CD4-positive, alpha-beta T cell (primary cell): ENCODE measurements at regions of chr16 and their contacts with region 1.

Region 1: DNA sequence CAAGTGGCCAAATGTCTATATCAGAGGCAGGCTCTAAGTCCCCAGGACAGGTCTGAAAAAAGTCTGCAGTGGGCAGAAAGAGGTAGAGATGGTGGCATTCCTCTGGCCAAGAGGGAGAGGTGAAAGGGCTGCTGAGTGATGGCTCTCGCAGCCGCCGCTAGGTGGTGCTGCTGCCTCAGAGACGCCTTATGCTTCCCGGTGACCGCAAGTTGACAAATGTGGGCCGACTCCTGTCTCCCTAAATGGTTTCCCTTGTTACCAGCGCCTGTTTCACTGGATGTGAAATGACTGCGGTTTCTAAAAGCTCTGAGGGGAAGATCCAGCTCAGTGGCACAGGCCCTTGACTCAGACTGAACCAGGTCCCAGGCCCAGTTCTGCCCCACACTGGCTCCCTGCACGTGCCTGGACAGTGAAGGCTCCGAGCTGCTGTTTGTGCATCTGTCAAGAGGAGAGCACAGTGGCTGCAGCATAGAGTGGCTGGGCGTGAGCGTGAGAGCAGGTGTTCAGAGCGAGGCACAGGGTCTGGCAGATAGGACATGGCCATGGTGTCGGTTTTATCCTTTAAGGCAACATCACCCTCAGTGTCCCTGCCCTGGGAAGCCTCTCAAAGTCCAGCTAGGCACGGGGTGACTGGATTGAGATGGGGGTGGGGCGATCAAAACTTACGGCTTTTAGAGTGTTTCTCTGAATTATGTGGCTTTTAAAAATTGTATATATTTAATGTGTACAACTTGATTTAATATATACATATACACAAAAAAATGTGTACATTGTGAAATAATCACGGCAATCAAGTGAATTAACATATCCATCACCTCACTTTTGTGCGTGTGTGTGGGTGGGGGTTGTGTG is 19.9 kb downstream of the CLEC16A start:
- DNase-seq: peak; percentile 65 to 91 (median 78)
- ATAC-seq: peak; percentile 49
- H3K4me3 ChIP-seq: peak overlapping the region; percentile 9
- H3K4me3 Mint-ChIP-seq: peak overlapping the region; percentile 38
- H3K27ac ChIP-seq: no peak overlapping the region
- H3K27ac Mint-ChIP-seq: peak overlapping the region; percentile 76
- H3K4me1 ChIP-seq: peaks cover 28% of the 10 kb centered on the region
- H3K4me1 Mint-ChIP-seq: peaks cover 30% of the 10 kb centered on the region
- H3K27me3 ChIP-seq: no peaks in the 10 kb centered on the region
- H3K27me3 Mint-ChIP-seq: no peaks in the 10 kb centered on the region
- CTCF ChIP-seq: peak; percentile 99

Region 2: GRCh38 chr16:10944249-10945064 is 19.8 kb before region 1 on chr16 and contains the start of gene CLEC16A:
- CTCF ChIA-PET with region 1: interaction called, 4 read pairs
- POLR2A ChIA-PET with region 1: interaction called, 10 read pairs
- intact Hi-C with region 1: no loop called
- DNase-seq: peak; percentile 89 to 98 (median 95)
- ATAC-seq: peak; percentile 76
- H3K4me3 ChIP-seq: peak within 1 kb of the TSS; percentile 85
- H3K4me3 Mint-ChIP-seq: peak within 1 kb of the TSS; percentile 96
- H3K27ac ChIP-seq: peak within 1 kb of the TSS in 1 of 2 donors; percentile 55
- H3K27ac Mint-ChIP-seq: peak within 1 kb of the TSS; percentile 76
- H3K4me1 ChIP-seq: peaks cover 73% of the 10 kb centered on the region
- H3K4me1 Mint-ChIP-seq: peaks cover 73% of the 10 kb centered on the region
- H3K27me3 ChIP-seq: no peaks in the 10 kb centered on the region
- H3K27me3 Mint-ChIP-seq: no peaks in the 10 kb centered on the region
- CTCF ChIP-seq: no peak
- total RNA-seq, gene CLEC16A: 21.7 to 22.7 TPM

Region 3: DNA sequence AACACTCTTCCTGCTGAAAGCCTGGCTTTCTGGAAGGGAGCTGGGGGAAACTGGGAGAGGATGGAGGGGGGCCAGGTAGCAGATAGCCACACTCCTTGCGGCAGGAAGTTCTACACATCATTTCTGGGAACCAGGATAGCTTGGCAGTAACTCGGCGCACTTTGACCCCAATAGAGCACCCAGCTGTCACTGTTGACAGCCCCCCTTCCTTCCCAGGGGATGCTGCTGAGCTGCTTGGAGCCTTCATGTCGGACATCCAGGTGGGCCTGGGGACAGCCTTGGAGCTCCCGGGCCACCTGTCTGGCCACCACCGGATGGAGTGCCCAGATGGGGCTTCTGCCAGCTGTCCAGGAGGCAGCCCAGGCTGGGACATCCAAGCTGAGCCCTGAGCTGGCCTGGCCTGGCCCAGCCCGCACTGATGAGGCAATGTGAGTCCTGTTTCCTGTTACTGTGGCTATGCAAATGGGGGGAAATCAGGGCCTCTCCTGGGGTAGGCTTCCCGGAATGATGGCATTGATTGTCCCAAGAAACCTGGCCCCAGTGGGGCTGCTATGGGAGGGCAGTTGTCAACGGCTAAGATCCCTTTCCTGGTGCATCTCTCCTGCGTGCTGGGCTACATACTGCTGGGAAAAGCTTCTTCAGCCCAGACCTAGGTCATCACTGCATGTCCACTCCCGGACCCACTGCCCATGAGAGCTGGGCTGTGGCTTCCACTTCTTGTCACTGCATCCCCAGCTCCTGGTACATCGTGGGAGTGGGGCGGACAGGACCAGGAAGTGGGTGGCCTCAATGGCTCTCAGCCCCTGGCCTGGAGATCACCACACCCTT is 241.7 kb after region 1 on chr16:
- CTCF ChIA-PET with region 1: no interaction called
- POLR2A ChIA-PET with region 1: no interaction called
- intact Hi-C with region 1: no loop called
- DNase-seq: peak in 2 of 14 experiments; percentile 46 to 49
- ATAC-seq: no peak
- H3K4me3 ChIP-seq: no peak overlapping the region
- H3K4me3 Mint-ChIP-seq: no peak overlapping the region
- H3K27ac ChIP-seq: no peak overlapping the region
- H3K27ac Mint-ChIP-seq: no peak overlapping the region
- H3K4me1 ChIP-seq: peaks cover 21% of the 10 kb centered on the region
- H3K4me1 Mint-ChIP-seq: peaks cover 10% of the 10 kb centered on the region
- H3K27me3 ChIP-seq: peaks cover 0 to 2% of the 10 kb centered on the region in 2 experiments
- H3K27me3 Mint-ChIP-seq: no peaks in the 10 kb centered on the region
- CTCF ChIP-seq: no peak

Region 4: DNA sequence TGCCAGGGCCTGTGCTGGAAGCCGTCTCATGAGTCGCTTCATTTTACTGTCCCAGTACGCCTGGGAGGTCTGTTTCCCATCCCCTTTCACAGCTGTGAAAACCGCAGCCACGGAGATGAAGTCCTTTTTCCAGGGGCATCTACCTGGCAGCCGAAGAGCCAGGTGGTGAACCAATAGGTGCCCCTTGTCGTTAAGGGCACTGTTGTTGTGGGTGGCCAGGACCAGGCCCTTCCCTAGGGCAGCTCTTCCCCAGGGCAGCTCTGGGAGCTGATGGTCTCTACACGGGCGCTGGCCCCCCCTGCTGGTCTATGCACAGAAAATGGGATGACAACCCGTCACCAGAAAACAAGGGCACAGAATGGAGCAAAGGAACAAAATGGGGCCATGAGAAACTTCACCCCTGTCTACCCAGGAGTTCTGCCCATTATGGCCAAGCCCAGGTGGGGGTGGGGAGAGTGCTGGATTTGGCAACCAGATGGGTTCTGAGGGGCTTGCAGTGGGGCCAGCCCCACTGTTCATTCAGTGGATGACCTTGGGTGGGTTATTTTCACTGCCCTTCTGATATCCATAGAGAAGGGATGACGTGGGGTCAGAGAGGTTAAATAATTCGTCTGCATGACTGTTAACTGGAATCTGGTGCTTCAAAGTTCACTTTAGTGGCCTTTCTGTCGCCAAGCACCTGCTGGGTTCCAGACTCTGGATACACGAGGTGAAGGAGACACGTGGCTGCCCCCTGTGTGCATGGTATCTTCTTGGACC is 392.5 kb after region 1 on chr16:
- CTCF ChIA-PET with region 1: interaction called, 7 read pairs
- POLR2A ChIA-PET with region 1: no interaction called
- intact Hi-C with region 1: loop called in 1 of 2 experiments (anchors 2 kb)
- DNase-seq: peak in 13 of 14 experiments; percentile 33 to 76 (median 48)
- ATAC-seq: no peak
- H3K4me3 ChIP-seq: no peak overlapping the region
- H3K4me3 Mint-ChIP-seq: peak overlapping the region; percentile 42
- H3K27ac ChIP-seq: no peak overlapping the region
- H3K27ac Mint-ChIP-seq: peak overlapping the region; percentile 93
- H3K4me1 ChIP-seq: peaks cover 53% of the 10 kb centered on the region
- H3K4me1 Mint-ChIP-seq: peaks cover 76% of the 10 kb centered on the region
- H3K27me3 ChIP-seq: peaks cover 0 to 4% of the 10 kb centered on the region in 2 experiments
- H3K27me3 Mint-ChIP-seq: no peaks in the 10 kb centered on the region
- CTCF ChIP-seq: peak; percentile 61

Region 5: GRCh38 chr16:11407047-11407982 is 443.1 kb after region 1 on chr16:
- CTCF ChIA-PET with region 1: no interaction called
- POLR2A ChIA-PET with region 1: no interaction called
- intact Hi-C with region 1: loop called (anchors 5 kb)
- DNase-seq: peak; percentile 40 to 81 (median 54)
- ATAC-seq: peak; percentile 78
- H3K4me3 ChIP-seq: no peak overlapping the region
- H3K4me3 Mint-ChIP-seq: no peak overlapping the region
- H3K27ac ChIP-seq: no peak overlapping the region
- H3K27ac Mint-ChIP-seq: no peak overlapping the region
- H3K4me1 ChIP-seq: no peaks in the 10 kb centered on the region
- H3K4me1 Mint-ChIP-seq: no peaks in the 10 kb centered on the region
- H3K27me3 ChIP-seq: no peaks in the 10 kb centered on the region
- H3K27me3 Mint-ChIP-seq: no peaks in the 10 kb centered on the region
- CTCF ChIP-seq: peak; percentile 69

Region 6: GRCh38 chr16:11715246-11715947 is 751.1 kb after region 1 on chr16:
- CTCF ChIA-PET with region 1: interaction called, 3 read pairs
- POLR2A ChIA-PET with region 1: no interaction called
- intact Hi-C with region 1: loop called (anchors 2 to 5 kb)
- DNase-seq: no peak
- ATAC-seq: no peak
- H3K4me3 ChIP-seq: no peak overlapping the region
- H3K4me3 Mint-ChIP-seq: no peak overlapping the region
- H3K27ac ChIP-seq: no peak overlapping the region
- H3K27ac Mint-ChIP-seq: peak overlapping the region; percentile 36
- H3K4me1 ChIP-seq: no peaks in the 10 kb centered on the region
- H3K4me1 Mint-ChIP-seq: peaks cover 20% of the 10 kb centered on the region
- H3K27me3 ChIP-seq: no peaks in the 10 kb centered on the region
- H3K27me3 Mint-ChIP-seq: no peaks in the 10 kb centered on the region
- CTCF ChIP-seq: no peak